Calu3 (cell line): ENCODE measurements at regions of chr1 and their contacts with region 1.

Region 1: GRCh38 chr1:218480137-218480536 is 135.0 kb downstream of the TGFB2 start:
- DNase-seq: no peak
- H3K4me3 Mint-ChIP-seq: no peak overlapping the region
- H3K27ac Mint-ChIP-seq: peak overlapping the region; percentile 79
- H3K4me1 Mint-ChIP-seq: peaks cover 59% of the 10 kb centered on the region
- H3K27me3 Mint-ChIP-seq: no peaks in the 10 kb centered on the region
- CTCF ChIP-seq: no peak

Region 2: DNA sequence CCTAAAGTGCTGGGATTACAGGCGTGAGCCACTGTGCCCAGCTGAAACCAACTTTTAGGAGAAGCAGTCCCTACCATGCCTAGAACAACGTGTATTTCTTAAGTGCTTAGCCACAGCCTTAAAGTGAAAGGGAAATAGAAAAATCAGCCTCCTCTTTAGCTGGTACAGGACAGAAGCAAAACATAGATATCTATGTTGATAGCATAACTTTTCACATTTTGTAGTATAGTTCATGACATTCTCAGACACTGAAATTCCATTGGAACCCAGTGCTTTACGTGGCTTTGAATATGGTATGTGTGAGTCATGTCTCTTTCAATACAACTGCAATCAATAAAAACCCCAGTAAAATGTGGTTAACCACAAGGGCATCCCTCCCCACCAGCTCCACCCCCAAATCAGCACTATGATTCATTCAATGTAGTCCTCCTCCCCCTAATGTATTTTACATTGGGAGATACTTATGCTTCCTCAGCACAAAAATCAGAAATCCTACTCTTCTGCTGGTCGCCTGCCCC is 102.9 kb before region 1 on chr1:
- CTCF ChIA-PET with region 1: no interaction called
- intact Hi-C with region 1: loop called (anchors 2 kb)
- DNase-seq: peak; percentile 83
- H3K4me3 Mint-ChIP-seq: peak overlapping the region; percentile 41
- H3K27ac Mint-ChIP-seq: peak overlapping the region; percentile 83
- H3K4me1 Mint-ChIP-seq: peaks cover 83% of the 10 kb centered on the region
- H3K27me3 Mint-ChIP-seq: no peaks in the 10 kb centered on the region
- CTCF ChIP-seq: no peak

Region 3: DNA sequence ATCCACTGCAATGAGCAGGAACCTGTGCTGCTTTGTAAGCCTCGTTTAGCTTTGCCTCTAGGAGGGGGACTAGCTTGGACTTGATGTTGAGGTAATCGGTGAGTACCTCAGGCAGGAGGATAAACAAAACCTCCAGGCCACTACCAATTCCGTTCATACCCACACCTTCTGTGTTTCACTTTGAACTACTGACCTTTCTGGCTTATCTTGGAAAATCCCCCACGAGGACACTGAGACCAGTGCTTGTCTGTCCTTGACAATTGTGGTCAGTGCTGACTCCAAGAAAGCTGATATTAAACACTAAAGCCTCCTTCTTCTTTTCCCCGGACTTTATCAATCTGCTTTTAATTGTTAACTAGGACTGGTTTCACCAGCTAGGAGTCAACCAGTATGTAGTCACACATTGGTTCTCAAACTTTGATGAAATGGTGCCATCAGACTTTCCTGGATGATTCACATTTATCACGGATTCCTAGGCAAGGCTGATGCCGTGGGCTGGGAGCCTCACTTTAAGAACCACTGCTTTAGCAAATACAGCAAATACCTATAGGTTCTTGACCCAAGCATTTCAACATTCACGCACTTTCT is 82.3 kb before region 1 on chr1:
- CTCF ChIA-PET with region 1: interaction called, 5 read pairs
- intact Hi-C with region 1: loop called (anchors 2 kb)
- DNase-seq: peak; percentile 82
- H3K4me3 Mint-ChIP-seq: peak overlapping the region; percentile 26
- H3K27ac Mint-ChIP-seq: peak overlapping the region; percentile 71
- H3K4me1 Mint-ChIP-seq: peaks cover 40% of the 10 kb centered on the region
- H3K27me3 Mint-ChIP-seq: no peaks in the 10 kb centered on the region
- CTCF ChIP-seq: no peak

Region 4: DNA sequence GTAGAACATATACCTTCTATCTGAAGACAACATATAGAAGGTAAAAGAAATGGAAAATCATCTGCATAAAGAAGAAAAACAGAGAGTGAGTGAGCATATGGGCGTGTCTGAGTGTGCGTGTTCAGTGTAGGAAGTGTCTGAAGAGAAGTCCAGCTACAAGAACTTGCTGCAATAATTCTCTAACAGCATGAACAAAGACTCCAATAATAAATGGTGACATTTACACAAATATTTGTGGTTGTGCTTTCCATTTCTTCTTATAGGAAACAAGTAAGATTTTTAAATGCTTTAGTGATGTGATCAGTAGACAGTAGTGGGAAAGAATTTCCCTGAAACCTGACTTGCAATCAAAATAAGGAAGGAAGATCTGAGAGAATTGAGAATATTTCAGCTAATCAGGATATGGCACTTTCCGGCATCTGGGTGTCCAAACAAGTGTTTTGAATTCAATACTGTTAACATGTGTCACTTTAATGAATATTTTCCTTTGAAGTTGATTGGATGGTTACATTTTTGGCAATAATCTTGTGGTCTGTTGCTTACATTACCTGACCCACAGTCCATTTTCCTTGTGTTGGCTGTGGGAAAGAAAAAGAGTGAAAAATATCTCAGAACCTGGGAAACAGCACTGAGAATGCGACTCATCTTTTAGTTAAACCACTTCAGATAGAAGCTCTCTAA is 19.0 kb after region 1 on chr1:
- CTCF ChIA-PET with region 1: interaction called, 3 read pairs
- intact Hi-C with region 1: loop called (anchors 1 kb)
- DNase-seq: no peak
- H3K4me3 Mint-ChIP-seq: peak overlapping the region; percentile 62
- H3K27ac Mint-ChIP-seq: peak overlapping the region; percentile 95
- H3K4me1 Mint-ChIP-seq: peaks cover 45% of the 10 kb centered on the region
- H3K27me3 Mint-ChIP-seq: no peaks in the 10 kb centered on the region
- CTCF ChIP-seq: no peak

Region 5: DNA sequence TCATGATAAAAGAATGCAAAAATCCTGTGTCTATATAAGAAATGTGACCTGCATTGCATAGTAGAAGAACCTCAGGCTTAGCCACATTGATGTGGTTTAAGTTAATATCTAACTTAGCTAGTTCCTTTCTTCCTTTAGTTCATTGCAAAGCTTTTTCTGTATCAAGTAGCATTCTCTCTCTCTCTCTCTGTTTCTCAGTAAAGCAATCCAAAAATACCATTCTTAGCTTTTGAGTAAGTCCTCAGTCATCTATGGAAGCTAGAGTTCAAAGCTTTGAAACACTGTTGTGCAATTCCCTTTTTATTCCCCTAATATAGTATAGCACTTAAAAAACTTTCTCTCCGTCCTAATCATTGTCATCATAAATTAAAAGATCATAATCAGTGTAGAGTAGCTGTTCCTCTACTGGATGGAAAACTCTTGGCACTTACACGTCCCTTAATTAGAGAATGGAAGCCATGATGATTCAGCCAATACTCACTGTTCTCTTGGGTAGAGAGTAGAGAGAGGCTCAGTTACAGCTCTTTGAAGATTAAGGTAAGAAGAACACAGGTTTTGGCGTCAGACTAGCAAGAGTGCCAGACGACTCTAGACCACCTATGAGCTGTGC is 343.3 kb after region 1 on chr1:
- CTCF ChIA-PET with region 1: no interaction called
- intact Hi-C with region 1: loop called (anchors 10 kb)
- DNase-seq: peak; percentile 19
- H3K4me3 Mint-ChIP-seq: no peak overlapping the region
- H3K27ac Mint-ChIP-seq: peak overlapping the region; percentile 77
- H3K4me1 Mint-ChIP-seq: peaks cover 57% of the 10 kb centered on the region
- H3K27me3 Mint-ChIP-seq: no peaks in the 10 kb centered on the region
- CTCF ChIP-seq: no peak